Lower leg skin (tissue), 4 donors: ENCODE measurements at regions of chr1 and their contacts with region 1.

Region 1: GRCh38 chr1:181936768-181937581 is 124.5 kb downstream of the ZNF648 start:
- DNase-seq: peak in 1 of 2 donors; percentile 23
- H3K4me3 ChIP-seq: no peak overlapping the region
- CTCF ChIP-seq: no peak
- POLR2A ChIP-seq: no peak

Region 2: GRCh38 chr1:181732218-181732990 is 204.6 kb before region 1 on chr1:
- intact Hi-C with region 1: loop called (anchors 5 kb)
- DNase-seq: no peak
- H3K4me3 ChIP-seq: no peak overlapping the region
- CTCF ChIP-seq: no peak
- POLR2A ChIP-seq: no peak

Region 3: GRCh38 chr1:181898773-181899172 is 38.2 kb before region 1 on chr1:
- intact Hi-C with region 1: no loop called
- DNase-seq: no peak
- H3K4me3 ChIP-seq: no peak overlapping the region
- CTCF ChIP-seq: no peak
- POLR2A ChIP-seq: no peak